ENCODE measurements at regions of chr1 and their contacts with region 1.

Region 1: GRCh38 chr1:115062542-115063011 is 26.7 kb downstream of the TSPAN2 start:
- DNase-seq: peak; percentile 68
- H3K4me3 ChIP-seq: no peak overlapping the region
- H3K27ac ChIP-seq: peak overlapping the region; percentile 86
- H3K4me1 ChIP-seq: peaks cover 22% of the 10 kb centered on the region
- H3K27me3 ChIP-seq: no peaks in the 10 kb centered on the region
- CTCF ChIP-seq: no peak
- POLR2A ChIP-seq: no peak

Region 2: GRCh38 chr1:114670083-114671010 is 392.2 kb before region 1 on chr1:
- CTCF ChIA-PET with region 1: no interaction called
- POLR2A ChIA-PET with region 1: no interaction called
- dilution Hi-C with region 1: no loop called
- intact Hi-C with region 1: loop called (anchors 10 kb)
- DNase-seq: peak; percentile 91
- H3K4me3 ChIP-seq: peak overlapping the region in 2 of 3 experiments; percentile 49 to 62
- H3K27ac ChIP-seq: no peak overlapping the region
- H3K4me1 ChIP-seq: peaks cover 11% of the 10 kb centered on the region
- H3K27me3 ChIP-seq: peaks cover 10 to 17% of the 10 kb centered on the region in 2 experiments
- CTCF ChIP-seq: no peak
- POLR2A ChIP-seq: no peak

Region 3: DNA sequence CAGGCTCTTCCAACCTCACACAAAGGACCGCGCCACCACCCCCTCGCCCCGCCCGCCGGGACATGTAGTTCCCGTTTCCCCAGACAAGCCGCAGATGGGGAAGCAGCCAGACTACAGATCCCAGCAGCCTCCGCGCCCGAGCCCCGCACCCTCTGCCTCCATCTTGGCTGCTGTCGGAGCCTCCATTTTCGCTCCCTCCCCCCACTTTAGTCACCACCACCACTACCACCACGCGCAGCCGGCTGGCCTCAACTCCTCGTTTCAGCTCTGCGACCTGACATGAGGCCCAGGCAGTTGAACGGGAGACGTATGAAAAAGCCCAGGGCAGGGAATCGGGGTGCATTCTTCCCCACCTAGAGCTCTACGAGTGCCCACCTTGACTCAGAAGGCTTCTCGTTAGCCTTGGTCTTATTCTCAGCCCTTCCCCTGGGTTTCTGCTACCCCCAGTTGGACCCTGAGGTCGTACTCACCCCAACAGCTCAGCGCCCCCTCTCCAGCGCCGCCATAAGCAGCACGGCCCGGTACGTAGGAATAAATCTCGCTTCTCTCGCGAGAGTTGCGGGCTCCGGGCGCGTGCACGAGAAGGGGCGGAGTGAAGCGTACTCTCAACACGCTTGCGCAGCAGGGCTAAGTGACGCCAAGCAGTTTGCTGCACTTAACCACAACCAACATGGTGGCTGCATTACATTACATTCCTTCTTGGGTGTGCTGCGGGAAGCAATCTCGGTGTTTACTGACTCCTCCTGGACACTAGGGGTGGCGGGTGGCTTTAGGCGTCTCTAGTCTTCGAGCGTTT is 304.9 kb before region 1 on chr1 and contains the start of gene CSDE1:
- CTCF ChIA-PET with region 1: no interaction called
- POLR2A ChIA-PET with region 1: no interaction called
- dilution Hi-C with region 1: no loop called
- intact Hi-C with region 1: loop called (anchors 10 kb)
- DNase-seq: peak; percentile 99
- H3K4me3 ChIP-seq: peak within 1 kb of the TSS; percentile 75 to 93 (median 91)
- H3K27ac ChIP-seq: peak within 1 kb of the TSS; percentile 98
- H3K4me1 ChIP-seq: peaks cover 28% of the 10 kb centered on the region
- H3K27me3 ChIP-seq: no peaks in the 10 kb centered on the region
- CTCF ChIP-seq: peak; percentile 31 to 36
- POLR2A ChIP-seq: peak; percentile 91
- total RNA-seq, gene CSDE1: 486 and 492 TPM in 2 replicates

Region 4: DNA sequence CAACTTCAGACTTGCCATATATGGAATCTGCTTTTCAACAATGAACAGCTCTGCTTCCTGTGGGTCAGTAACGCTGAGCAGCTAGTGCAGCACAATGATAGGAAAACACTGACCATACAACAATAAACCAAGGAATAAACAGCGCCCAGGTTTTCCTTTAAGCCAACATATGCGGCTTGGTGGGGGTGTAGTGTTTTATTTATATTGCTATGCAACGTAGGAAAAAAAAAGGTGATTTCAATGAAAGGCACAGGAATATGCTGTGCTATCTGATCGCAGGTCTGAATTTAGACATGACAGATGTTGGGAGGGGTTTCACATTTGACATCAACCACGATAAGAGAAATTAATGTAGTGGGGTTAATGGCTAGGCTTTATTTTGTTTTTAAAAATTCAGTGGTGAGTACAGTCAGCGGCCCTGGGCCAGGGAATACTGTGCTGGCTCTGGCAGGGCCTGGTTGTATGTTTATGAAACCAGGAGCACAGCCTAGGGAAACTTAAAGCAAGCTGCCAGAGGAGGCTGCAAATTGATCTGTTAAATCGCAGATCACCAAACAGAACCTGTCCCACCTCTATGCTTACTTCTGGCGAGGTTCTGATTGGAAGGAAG is 22.4 kb after region 1 on chr1:
- CTCF ChIA-PET with region 1: interaction called, 4 read pairs
- POLR2A ChIA-PET with region 1: no interaction called
- dilution Hi-C with region 1: no loop called
- intact Hi-C with region 1: loop called (anchors 1 kb)
- DNase-seq: peak; percentile 81
- H3K4me3 ChIP-seq: no peak overlapping the region
- H3K27ac ChIP-seq: peak overlapping the region; percentile 15
- H3K4me1 ChIP-seq: peaks cover 19% of the 10 kb centered on the region
- H3K27me3 ChIP-seq: peaks cover 6 to 16% of the 10 kb centered on the region in 2 experiments
- CTCF ChIP-seq: no peak
- POLR2A ChIP-seq: no peak